GM12878 (cell line): ENCODE measurements at regions of chr10 and their contacts with region 1.

Region 1: GRCh38 chr10:119872860-119873681 is 428 bp upstream of the MCMBP start:
- DNase-seq: peak; percentile 49
- ATAC-seq: peak; percentile 93
- H3K4me3 ChIP-seq: peak overlapping the region; percentile 85
- H3K27ac ChIP-seq: peak overlapping the region; percentile 83
- H3K4me1 ChIP-seq: peaks cover 9% of the 10 kb centered on the region
- H3K27me3 ChIP-seq: no peaks in the 10 kb centered on the region
- CTCF ChIP-seq: 0 out of 6 replicates have a peak, but pooled peaks of 1 of the 3 experiments have one; percentile 4
- EP300 ChIP-seq: no peak
- POLR2A ChIP-seq: peak; percentile 70
- RAD21 ChIP-seq: no peak

Region 2: GRCh38 chr10:119596537-119597404 is 276.3 kb before region 1 on chr10 and contains the start of gene TIAL1:
- CTCF ChIA-PET with region 1: no interaction called
- POLR2A ChIA-PET with region 1: interaction called, 8 read pairs
- RAD21 ChIA-PET with region 1: no interaction called
- SMC1A ChIA-PET with region 1: no interaction called
- in situ Hi-C with region 1: no loop called
- intact Hi-C with region 1: loop called (anchors 5 kb)
- DNase-seq: peak; percentile 98
- ATAC-seq: peak; percentile 86
- H3K4me3 ChIP-seq: peak within 1 kb of the TSS; percentile 83
- H3K27ac ChIP-seq: peak within 1 kb of the TSS; percentile 97
- H3K4me1 ChIP-seq: peaks cover 7% of the 10 kb centered on the region; the same call in 1 of the 2 replicates
- H3K27me3 ChIP-seq: no peaks in the 10 kb centered on the region
- CTCF ChIP-seq: no peak
- EP300 ChIP-seq: no peak
- POLR2A ChIP-seq: peak; percentile 81
- RAD21 ChIP-seq: no peak
- polyA plus RNA-seq, gene TIAL1: 26.0 to 68.2 TPM

Region 3: GRCh38 chr10:119892188-119893065 is 19.4 kb after region 1 on chr10 and contains the start of gene SEC23IP:
- CTCF ChIA-PET with region 1: interaction called, 33 read pairs
- POLR2A ChIA-PET with region 1: interaction called, 69 read pairs
- RAD21 ChIA-PET with region 1: interaction called, 23 read pairs
- SMC1A ChIA-PET with region 1: interaction called, 11 read pairs
- in situ Hi-C with region 1: no loop called
- intact Hi-C with region 1: loop called (anchors 1 kb)
- DNase-seq: peak; percentile 93
- ATAC-seq: peak; percentile 98
- H3K4me3 ChIP-seq: peak within 1 kb of the TSS; percentile 80
- H3K27ac ChIP-seq: peak within 1 kb of the TSS; percentile 64
- H3K4me1 ChIP-seq: no peaks in the 10 kb centered on the region
- H3K27me3 ChIP-seq: no peaks in the 10 kb centered on the region
- CTCF ChIP-seq: no peak
- EP300 ChIP-seq: no peak; a peak in 1 of 4 replicates
- POLR2A ChIP-seq: peak; percentile 96
- RAD21 ChIP-seq: no peak
- polyA plus RNA-seq, gene SEC23IP: 15.1 to 20.8 TPM

Region 4: DNA sequence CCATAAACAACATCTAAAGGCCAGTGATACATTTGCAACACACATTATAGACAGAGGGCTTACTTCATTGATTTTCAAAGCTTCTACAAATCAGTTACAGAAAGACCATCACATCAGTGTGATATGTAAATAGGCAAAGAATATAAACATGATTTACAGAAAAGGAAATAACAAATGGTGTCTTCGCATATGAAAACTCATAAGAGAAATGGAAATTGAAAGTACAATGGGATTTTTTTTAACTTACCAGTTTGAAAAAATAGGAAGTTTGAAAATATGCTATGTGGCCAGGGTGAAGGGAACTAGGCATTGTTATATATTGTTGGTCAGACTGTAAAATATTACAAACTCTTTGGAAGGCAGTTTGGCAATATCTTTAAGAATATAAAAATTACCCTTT is 46.8 kb after region 1 on chr10:
- CTCF ChIA-PET with region 1: interaction called, 3 read pairs
- POLR2A ChIA-PET with region 1: no interaction called
- RAD21 ChIA-PET with region 1: interaction called, 13 read pairs
- SMC1A ChIA-PET with region 1: interaction called, 3 read pairs
- in situ Hi-C with region 1: no loop called
- intact Hi-C with region 1: no loop called
- DNase-seq: peak; percentile 13
- ATAC-seq: peak; percentile 86
- H3K4me3 ChIP-seq: 0 out of 2 replicates have a peak overlapping the region, but pooled peaks have one; percentile 10
- H3K27ac ChIP-seq: peak overlapping the region; percentile 75
- H3K4me1 ChIP-seq: peaks cover 8% of the 10 kb centered on the region
- H3K27me3 ChIP-seq: no peaks in the 10 kb centered on the region
- CTCF ChIP-seq: no peak
- EP300 ChIP-seq: no peak
- POLR2A ChIP-seq: no peak
- RAD21 ChIP-seq: no peak